Prostate gland (tissue), 2 donors: ENCODE measurements at regions of chr1 and their contacts with region 1.

Region 1: DNA sequence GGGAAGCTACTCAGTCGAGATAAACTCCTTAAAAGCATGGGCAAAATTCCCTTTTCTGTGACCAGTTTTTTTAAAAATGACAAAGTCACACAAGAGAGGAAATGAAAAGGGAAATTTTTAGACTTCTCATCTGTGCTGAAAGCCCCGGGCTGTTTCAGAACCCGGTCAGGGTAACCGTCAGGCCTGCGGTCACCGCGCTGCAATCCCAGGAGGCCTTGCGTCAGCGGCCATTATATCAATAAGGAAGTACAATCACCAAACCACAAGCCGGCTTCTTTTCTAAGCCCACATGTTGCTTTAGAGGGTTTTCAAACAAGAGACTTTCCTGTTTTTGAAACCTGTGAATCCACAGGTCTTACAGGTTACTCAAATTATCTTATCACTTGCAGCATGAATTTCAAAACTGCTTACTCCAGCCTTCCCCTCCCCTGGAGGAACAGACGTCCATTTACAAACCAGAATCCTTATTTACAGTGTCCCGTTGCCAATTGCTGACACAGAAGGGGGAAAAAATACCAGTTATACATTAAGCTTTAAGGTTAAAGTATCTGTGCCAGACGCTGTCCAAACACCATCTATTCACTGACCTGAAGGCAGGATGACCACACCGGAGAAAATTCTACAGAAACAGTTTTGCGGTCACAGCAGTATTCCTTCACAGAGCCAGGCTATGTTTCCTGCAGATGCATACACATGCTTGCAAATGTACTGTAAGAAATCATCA is 165.3 kb downstream of the TOMM20 start:
- DNase-seq: peak; percentile 55
- H3K4me3 ChIP-seq: no peak overlapping the region
- H3K27ac ChIP-seq: peak overlapping the region; percentile 57 to 74
- H3K4me1 ChIP-seq: peaks cover 29% of the 10 kb centered on the region
- H3K27me3 ChIP-seq: no peaks in the 10 kb centered on the region
- CTCF ChIP-seq: no peak
- POLR2A ChIP-seq: no peak

Region 2: GRCh38 chr1:234925440-234926263 is 37.7 kb before region 1 on chr1:
- intact Hi-C with region 1: loop called (anchors 5 kb)
- DNase-seq: peak; percentile 50
- H3K4me3 ChIP-seq: no peak overlapping the region
- H3K27ac ChIP-seq: peak overlapping the region; percentile 34 to 59
- H3K4me1 ChIP-seq: peaks cover 3% of the 10 kb centered on the region
- H3K27me3 ChIP-seq: no peaks in the 10 kb centered on the region
- CTCF ChIP-seq: no peak
- POLR2A ChIP-seq: no peak

Region 3: GRCh38 chr1:234987415-234988154 is 24.2 kb after region 1 on chr1:
- intact Hi-C with region 1: no loop called
- DNase-seq: peak; percentile 71
- H3K4me3 ChIP-seq: no peak overlapping the region
- H3K27ac ChIP-seq: peak overlapping the region; percentile 72 to 79
- H3K4me1 ChIP-seq: peaks cover 8% of the 10 kb centered on the region
- H3K27me3 ChIP-seq: no peaks in the 10 kb centered on the region
- CTCF ChIP-seq: no peak
- POLR2A ChIP-seq: no peak